GM12878 (cell line): ENCODE measurements at regions of chr1 and their contacts with region 1.

Region 1: DNA sequence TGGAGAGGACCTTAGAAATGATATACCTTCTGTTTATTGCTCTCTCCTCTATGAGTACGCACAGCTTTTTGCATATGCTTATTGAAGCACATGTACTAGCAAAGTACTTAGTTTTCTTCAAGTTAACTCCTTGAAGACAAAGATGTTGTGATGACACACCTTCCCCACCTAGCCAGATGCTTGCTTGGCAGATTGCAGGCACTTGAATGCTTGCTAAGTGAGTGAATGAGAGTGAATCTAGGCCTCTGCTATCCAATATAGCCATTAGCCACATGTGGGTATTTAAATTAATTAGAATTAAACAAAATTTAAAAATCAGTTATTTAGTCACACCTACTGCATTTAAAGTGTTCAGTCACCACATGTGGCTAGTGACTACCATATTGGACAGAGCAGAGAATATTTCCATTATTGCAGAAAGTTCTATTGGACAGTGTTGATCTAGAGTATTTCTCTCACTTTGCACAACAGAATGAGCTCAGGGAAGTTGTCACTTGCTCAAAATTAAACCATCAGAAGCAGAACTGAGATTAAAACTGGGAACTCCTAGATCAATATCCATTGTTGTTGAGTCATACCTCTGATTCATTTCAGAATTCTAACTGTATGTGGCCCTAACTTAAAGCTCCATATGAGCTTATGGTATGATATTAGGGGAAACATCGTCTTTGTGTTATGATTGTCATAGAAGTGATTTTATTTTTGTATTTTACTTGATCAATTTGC is 8.6 kb upstream of the EEIG2 start:
- DNase-seq: peak; percentile 70
- ATAC-seq: peak; percentile 97
- H3K4me3 ChIP-seq: no peak overlapping the region
- H3K27ac ChIP-seq: peak overlapping the region; percentile 66
- H3K4me1 ChIP-seq: peaks cover 14% of the 10 kb centered on the region
- H3K27me3 ChIP-seq: no peaks in the 10 kb centered on the region
- CTCF ChIP-seq: no peak
- EP300 ChIP-seq: peak; percentile 89 to 98
- POLR2A ChIP-seq: no peak
- RAD21 ChIP-seq: no peak

Region 2: GRCh38 chr1:108533351-108534083 is 17.8 kb before region 1 on chr1:
- CTCF ChIA-PET with region 1: interaction called, 13 read pairs
- POLR2A ChIA-PET with region 1: interaction called, 3 read pairs
- RAD21 ChIA-PET with region 1: interaction called, 9 read pairs
- SMC1A ChIA-PET with region 1: interaction called, 27 read pairs
- in situ Hi-C with region 1: no loop called
- intact Hi-C with region 1: no loop called
- DNase-seq: peak; percentile 40
- ATAC-seq: peak; percentile 80
- H3K4me3 ChIP-seq: no peak overlapping the region
- H3K27ac ChIP-seq: no peak overlapping the region
- H3K4me1 ChIP-seq: peaks cover 6% of the 10 kb centered on the region
- H3K27me3 ChIP-seq: no peaks in the 10 kb centered on the region
- CTCF ChIP-seq: 0 out of 6 replicates have a peak, but pooled peaks of 1 of the 3 experiments have one; percentile 8
- EP300 ChIP-seq: 0 out of 4 replicates have a peak, but pooled peaks of 1 of the 2 experiments have one; percentile 58
- POLR2A ChIP-seq: no peak
- RAD21 ChIP-seq: 0 out of 2 replicates have a peak, but pooled peaks have one; percentile 12